Activated T-helper 1 cell treated with anti-CD3 and anti-CD28 coated beads, Interleukin-12 subunit alpha, Interleukin-12 subunit beta, Interleukin-2, Interleukin-4 antibody, amounts not matched to agents 30 ng/mL and 10 ng/mL and 1 ng/mL, durations not matched to agents 14 hours and 24 hours and 36 hours (primary cell): ENCODE measurements at regions of chr16 and their contacts with region 1.

Region 1: DNA sequence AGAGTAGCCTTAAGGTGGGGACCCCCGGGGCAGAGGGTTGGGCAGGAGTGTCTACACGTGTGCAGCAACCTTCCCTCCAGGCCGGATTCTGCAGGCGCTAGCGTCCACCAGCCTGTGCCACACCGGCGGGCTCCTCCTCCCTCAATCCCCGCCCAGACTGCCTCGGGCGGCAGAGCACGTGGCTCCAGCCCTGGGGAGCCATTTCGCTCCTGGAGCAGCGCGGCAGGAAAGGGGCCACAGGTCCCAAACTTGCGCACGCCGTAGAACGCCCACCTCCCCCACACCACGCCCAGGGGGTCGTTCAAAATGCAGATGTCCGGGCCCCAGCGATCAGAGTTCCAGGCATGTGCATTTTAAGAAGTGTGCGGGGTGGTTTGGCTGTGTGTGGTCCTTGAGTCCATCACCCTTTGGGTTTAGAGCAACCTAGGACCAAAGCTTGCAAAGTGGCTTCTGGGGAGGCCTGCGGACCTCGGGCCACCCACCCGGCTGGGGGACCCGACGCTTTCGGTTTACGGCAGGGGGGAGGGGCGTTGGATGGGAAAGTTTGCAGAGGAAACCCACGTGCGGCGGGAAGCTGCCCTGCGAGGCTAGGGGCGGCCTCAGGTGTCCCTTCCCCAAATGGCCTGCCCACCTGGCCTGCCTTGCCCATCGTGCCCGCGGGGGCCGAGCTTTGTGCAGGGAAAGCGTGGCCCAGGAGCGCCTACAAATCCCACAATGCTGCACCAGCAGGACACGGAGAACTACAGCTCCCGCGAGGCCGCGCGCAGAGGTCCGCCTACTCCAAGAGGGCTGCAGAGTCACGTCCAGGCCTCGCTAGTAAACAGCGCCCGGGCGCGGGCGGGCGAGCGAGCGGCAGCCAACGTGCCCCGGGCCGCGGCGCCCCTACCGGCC is 1.4 kb downstream of the TFAP4 start:
- DNase-seq: peak; percentile 85
- H3K4me3 Mint-ChIP-seq: peak overlapping the region; percentile 88
- H3K27ac Mint-ChIP-seq: peak overlapping the region; percentile 94
- H3K4me1 Mint-ChIP-seq: peaks cover 7% of the 10 kb centered on the region
- H3K27me3 Mint-ChIP-seq: peaks cover 2% of the 10 kb centered on the region

Region 2: DNA sequence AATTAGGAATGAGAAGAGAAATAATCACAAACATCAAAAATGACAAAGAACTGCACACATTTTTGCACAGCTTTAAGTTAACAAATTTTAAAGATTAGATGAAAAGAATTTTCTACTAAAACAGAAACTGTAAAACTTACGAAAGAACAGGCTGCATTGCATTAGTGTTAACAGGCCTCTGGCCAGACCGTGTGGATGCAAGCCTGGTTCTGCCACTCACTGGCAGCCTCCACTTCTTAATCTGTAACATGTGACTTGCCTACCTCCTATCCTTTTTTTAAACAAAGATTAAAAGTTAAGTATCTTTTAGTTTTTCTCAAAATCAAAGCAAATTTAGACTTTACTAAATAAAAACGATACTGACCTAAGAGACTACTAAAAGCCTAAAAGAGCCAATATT is 428.4 kb before region 1 on chr16:
- intact Hi-C with region 1: no loop called
- DNase-seq: no peak
- H3K4me3 Mint-ChIP-seq: no peak overlapping the region
- H3K27ac Mint-ChIP-seq: no peak overlapping the region
- H3K4me1 Mint-ChIP-seq: peaks cover 9% of the 10 kb centered on the region
- H3K27me3 Mint-ChIP-seq: no peaks in the 10 kb centered on the region

Region 3: DNA sequence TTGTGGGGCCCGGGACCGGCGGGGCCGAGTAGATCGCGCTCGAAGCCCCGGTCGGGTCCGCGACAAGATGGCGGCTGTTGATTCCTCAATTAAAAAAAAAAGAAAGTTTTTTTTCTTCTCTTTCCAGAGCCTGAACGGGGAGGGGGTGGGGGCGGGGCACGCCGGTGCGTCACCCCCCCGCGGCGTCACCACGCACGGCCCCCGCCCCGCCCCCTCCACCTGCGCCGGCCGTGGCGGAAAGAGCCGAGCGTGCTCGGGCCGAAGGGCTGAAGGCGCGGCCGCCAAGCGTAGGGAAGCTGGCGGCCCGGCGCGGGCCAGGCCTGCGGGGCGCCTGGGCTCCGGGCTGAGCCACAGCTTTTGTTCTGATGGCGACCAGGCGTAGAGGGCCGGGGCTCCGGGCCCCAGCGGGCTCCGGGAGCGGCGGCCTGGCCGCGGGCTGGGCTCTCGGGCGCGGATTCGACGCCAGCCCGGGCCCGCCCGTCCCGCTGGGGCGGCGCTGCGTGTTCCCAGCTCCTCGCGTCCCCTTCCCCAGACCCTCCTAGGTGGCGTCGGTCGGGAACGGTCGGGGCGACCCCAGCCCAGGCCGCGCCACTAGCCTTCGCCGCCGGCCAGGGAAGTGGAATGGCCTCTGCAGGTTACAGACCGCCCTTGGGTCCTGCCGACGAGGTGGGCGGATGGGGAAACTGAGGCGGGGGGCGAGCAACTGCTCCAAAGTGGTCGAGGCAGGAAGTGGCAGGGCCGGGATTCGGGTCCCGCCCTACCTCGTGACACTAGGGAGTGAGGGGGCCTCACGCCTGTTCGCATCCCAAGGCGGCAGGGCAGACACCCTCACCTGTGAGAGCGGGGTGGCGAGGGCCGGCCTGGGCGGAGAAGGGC is 390.6 kb before region 1 on chr16 and contains the start of gene CREBBP:
- intact Hi-C with region 1: loop called (anchors 1 kb)
- DNase-seq: peak; percentile 86
- H3K4me3 Mint-ChIP-seq: peak within 1 kb of the TSS; percentile 87
- H3K27ac Mint-ChIP-seq: peak within 1 kb of the TSS; percentile 85
- H3K4me1 Mint-ChIP-seq: peaks cover 34% of the 10 kb centered on the region
- H3K27me3 Mint-ChIP-seq: peaks cover 3% of the 10 kb centered on the region
- total RNA-seq, gene CREBBP: 49.3 and 50.3 TPM in 2 replicates

Region 4: DNA sequence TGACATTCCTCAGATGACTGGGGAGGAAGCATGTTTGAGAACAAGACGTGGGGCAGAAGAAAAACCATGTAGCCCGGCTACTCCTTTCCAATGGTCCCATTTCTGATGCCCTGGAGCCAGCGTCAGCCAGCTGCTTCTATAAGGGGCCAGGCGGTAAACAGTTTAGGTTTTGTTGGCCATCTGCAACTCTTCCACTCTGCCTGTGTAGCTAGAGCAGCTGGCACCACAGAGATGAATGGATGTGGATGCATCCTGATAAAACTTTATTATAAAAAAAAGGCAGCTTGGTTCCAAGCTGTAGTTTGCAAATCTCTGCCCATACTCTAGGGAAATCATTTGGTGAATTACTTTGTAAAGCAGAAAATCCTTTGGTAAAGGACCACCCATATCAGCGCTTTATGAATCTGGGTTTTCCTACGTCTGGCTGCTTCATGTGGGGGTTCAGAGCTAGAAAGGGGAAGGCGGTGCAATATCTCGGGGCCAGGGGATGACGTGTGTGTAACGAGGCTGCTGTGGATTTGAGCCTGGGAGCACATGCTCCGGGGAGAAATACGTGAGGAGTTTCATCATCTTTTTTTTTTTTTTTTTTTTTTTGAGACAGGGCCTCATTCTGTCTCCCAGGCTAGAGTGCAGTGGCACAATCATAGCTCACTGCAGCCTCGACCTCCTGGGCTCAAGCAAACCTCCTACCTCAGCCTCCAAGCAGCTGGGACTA is 26.2 kb before region 1 on chr16:
- intact Hi-C with region 1: no loop called
- DNase-seq: no peak
- H3K4me3 Mint-ChIP-seq: no peak overlapping the region
- H3K27ac Mint-ChIP-seq: no peak overlapping the region
- H3K4me1 Mint-ChIP-seq: no peaks in the 10 kb centered on the region
- H3K27me3 Mint-ChIP-seq: peaks cover 6% of the 10 kb centered on the region

Region 5: DNA sequence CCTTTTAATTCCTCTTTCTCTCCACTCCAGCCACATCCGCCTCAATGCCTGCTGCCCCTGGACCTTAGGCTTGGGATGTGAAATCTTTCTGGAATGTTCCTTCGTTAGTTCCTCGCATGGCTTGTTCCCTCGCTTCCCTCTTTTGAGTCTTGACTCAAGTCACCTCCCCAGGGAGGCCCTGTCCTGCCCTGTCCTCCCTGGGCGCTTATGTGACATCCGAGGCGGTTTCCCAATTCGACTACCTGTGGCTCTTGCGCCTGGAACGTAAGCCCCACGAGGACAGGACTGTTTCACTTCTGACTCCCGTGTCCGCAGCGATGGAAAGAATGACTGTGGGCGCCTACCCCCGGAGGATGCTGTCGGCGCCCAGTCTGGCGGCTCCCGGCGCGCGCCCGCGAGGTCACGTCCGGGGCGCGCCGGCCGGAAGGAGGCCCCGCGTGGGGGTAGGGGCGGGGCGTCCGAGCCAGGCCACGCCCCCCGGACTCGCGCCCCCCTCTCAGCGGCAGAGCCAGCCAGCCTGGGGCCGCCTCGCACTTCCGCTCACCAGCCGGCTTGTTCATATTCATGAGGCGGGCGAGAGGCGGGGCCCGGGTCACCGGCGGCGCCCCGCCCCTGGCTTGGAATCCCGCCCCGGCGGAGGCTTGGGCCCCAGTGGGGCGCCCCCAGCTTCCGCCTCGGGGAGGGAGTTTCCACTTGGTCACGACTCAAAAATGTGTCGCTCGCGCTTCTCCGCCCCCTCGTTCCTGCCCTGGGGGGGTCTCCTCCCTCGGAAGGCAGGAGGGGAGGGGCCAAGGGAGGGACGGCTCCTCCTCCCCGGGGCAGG is 36.0 kb after region 1 on chr16:
- intact Hi-C with region 1: loop called (anchors 1 kb)
- DNase-seq: peak; percentile 97
- H3K4me3 Mint-ChIP-seq: peak overlapping the region; percentile 96
- H3K27ac Mint-ChIP-seq: peak overlapping the region; percentile 96
- H3K4me1 Mint-ChIP-seq: peaks cover 22% of the 10 kb centered on the region
- H3K27me3 Mint-ChIP-seq: peaks cover 6% of the 10 kb centered on the region

Region 6: DNA sequence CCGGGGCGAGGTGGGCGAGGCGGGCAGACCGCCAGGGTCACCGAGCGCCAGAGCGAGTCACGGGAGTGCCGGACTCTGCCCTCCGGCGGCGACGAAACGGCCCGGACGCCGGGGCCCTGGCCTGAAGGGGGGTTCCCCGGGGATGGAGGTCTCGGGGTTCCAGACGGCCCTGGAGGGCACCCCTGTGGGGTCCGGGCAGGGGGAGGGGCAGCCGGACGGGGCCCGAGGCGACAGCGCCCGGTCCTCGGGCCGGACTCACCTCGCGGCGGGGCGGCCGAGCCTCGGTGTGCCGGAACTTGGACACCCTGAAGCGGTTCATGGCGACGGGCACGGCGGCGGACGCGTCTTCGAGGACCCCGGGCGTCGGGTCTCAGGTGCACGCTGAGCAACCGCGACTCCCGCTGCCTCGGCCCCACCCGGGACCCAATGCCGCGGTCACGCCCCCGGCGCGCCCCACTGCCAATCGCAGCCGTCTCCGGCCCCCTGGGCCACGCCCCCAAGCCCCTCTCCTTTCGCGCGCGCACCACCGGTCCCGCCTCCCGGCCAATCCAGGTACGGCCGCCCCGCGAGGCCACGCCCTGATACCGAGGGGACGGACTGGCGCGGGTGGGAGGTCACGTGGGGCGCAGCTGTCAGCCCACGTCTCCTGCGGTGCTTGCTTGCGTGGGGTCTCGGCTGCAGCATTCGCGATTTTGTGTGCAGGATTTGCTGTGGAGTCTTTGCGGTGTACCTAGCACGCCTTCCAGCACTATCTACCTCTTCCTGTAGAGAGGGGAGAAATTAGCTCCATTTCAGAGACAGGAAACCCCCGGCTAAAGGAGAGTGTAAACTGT is 145.0 kb after region 1 on chr16 and contains the start of gene CORO7:
- intact Hi-C with region 1: loop called (anchors 1 kb)
- DNase-seq: peak; percentile 99
- H3K4me3 Mint-ChIP-seq: peak within 1 kb of the TSS; percentile 90
- H3K27ac Mint-ChIP-seq: peak within 1 kb of the TSS; percentile 92
- H3K4me1 Mint-ChIP-seq: peaks cover 16% of the 10 kb centered on the region
- H3K27me3 Mint-ChIP-seq: peaks cover 7% of the 10 kb centered on the region
- total RNA-seq, gene CORO7: 87.9 and 90.8 TPM in 2 replicates

Region 7: GRCh38 chr16:4616047-4616811 is 344.8 kb after region 1 on chr16:
- intact Hi-C with region 1: loop called (anchors 1 kb)
- DNase-seq: peak; percentile 98
- H3K4me3 Mint-ChIP-seq: peak overlapping the region; percentile 95
- H3K27ac Mint-ChIP-seq: peak overlapping the region; percentile 98
- H3K4me1 Mint-ChIP-seq: peaks cover 16% of the 10 kb centered on the region
- H3K27me3 Mint-ChIP-seq: peaks cover 2% of the 10 kb centered on the region